CD8-positive, alpha-beta T cell (primary cell): ENCODE measurements at regions of chr20 and their contacts with region 1.

Region 1: DNA sequence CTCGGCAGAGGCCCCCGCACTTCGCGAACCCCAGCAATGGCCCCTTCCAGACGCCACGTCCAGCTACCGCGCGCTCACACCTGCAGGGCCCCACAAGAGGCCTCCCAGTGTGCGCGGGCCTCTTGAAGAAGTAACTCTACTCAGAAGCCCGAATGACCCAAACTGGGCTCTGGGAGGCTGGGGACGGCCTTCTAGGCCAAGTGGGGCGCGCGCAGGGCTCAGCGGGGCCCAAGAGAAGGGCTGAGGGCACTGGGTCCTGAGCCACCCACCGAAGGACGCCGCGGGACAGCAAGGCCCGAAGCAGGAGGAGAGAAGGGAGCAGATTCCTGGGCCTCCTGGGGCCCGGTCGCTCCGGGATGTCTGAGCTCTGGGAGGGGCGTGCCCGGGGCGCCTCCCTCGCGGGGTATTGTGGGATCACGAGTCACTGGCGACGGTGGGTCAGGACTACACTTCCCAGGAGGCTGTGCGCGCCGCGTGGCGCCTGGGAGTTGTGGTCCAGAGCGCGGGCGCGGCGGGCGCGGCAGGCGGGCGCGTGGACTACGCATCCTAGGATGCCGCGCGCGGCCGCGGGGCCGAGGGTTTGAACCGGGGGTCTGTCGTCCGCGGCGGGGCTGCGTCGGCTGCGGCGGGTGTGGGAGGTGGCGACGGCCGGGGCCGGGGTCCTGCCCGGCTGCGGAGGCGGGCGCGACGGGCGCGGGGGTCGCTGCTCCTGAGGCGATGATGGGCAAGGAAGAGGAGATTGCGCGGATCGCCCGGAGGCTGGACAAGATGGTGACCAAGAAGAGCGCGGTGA is at the start of gene TCEA2:
- DNase-seq: peak; percentile 84 to 97 (median 93)
- ATAC-seq: peak; percentile 94
- H3K4me3 ChIP-seq: peak within 1 kb of the TSS; percentile 47 to 68
- H3K4me3 Mint-ChIP-seq: peak within 1 kb of the TSS; percentile 82
- H3K27ac ChIP-seq: peak within 1 kb of the TSS; percentile 42 to 67
- H3K27ac Mint-ChIP-seq: peak within 1 kb of the TSS; percentile 63
- H3K4me1 ChIP-seq: peaks cover 48% of the 10 kb centered on the region
- H3K4me1 Mint-ChIP-seq: peaks cover 36% of the 10 kb centered on the region
- H3K27me3 ChIP-seq: no peaks in the 10 kb centered on the region
- H3K27me3 Mint-ChIP-seq: no peaks in the 10 kb centered on the region
- CTCF ChIP-seq: no peak
- total RNA-seq, gene TCEA2: 18.2 to 18.4 TPM

Region 2: DNA sequence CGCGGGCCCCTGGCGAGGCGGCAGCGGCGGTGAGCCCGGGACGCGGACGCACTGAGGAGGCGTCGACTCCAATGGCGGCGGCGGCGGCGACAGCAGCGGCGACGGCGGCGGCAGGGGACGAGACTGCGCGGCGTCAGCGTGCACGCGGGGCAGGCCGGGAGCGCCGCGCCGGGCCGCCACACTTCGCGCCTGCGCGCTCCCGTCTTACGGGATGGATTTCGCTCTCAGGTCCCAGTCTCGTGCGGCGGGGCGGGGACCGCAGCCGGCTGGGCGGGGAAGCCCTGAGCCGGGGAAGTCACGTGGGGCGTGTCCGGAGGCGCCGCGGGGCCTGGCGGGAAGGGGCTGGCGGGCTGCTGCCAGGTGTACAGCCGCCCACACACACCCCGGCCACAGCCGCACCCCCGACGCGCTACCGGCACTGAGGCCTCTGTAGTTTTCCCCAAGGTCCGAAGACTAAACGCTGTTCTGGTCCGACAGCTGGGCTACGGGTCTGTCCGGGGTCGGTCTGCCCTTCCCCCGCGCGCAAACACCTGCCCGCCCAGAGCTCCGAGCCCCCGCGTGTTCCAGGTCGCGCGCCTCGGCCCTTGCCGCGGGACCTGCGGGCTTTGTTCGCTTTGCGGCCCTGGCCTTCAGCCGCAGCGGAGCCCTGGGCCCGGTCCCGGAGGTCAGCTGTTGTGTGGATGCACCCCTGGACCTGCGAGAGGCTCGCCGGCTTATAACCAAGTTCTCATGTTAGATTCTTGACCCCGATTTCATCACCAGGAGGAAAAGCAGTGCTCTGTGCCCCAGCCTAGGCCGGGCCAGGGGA is 846.5 kb before region 1 on chr20 and contains the start of gene YTHDF1:
- CTCF ChIA-PET with region 1: no interaction called
- POLR2A ChIA-PET with region 1: no interaction called
- intact Hi-C with region 1: loop called in 1 of 2 experiments (anchors 10 kb)
- DNase-seq: peak; percentile 86 to 98 (median 95)
- ATAC-seq: peak; percentile 96
- H3K4me3 ChIP-seq: peak within 1 kb of the TSS; percentile 68 to 84
- H3K4me3 Mint-ChIP-seq: peak within 1 kb of the TSS; percentile 91
- H3K27ac ChIP-seq: peak within 1 kb of the TSS; percentile 73 to 74
- H3K27ac Mint-ChIP-seq: peak within 1 kb of the TSS; percentile 94
- H3K4me1 ChIP-seq: peaks cover 44% of the 10 kb centered on the region
- H3K4me1 Mint-ChIP-seq: peaks cover 44% of the 10 kb centered on the region
- H3K27me3 ChIP-seq: no peaks in the 10 kb centered on the region
- H3K27me3 Mint-ChIP-seq: peaks cover 2% of the 10 kb centered on the region
- CTCF ChIP-seq: no peak
- total RNA-seq, gene YTHDF1: 44.8 to 45.7 TPM

Region 3: DNA sequence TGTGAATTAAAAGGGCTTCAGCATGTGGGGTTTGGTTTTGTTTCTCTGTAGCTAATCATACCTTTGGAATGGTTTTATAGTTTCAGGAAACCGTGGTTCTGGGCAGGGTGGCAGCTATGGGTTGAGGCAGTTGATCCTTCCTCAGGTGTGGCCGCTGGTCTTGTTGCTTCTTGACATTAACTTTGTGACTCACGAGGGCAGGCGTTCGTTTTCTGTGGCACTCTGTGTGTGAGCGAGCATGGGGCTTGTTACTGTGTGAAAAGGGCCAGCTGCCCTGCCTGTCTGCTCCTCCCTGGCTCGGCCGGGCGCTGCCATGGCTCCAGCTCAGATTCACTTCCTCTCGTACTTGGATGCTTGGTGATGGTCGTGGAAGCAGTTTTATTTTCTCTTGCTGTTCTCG is 151.6 kb before region 1 on chr20:
- CTCF ChIA-PET with region 1: interaction called, 7 read pairs
- POLR2A ChIA-PET with region 1: no interaction called
- intact Hi-C with region 1: loop called in 1 of 2 experiments (anchors 1 kb)
- DNase-seq: no peak
- ATAC-seq: no peak
- H3K4me3 ChIP-seq: no peak overlapping the region
- H3K4me3 Mint-ChIP-seq: no peak overlapping the region
- H3K27ac ChIP-seq: no peak overlapping the region
- H3K27ac Mint-ChIP-seq: peak overlapping the region; percentile 46
- H3K4me1 ChIP-seq: peaks cover 13% of the 10 kb centered on the region
- H3K4me1 Mint-ChIP-seq: peaks cover 45% of the 10 kb centered on the region
- H3K27me3 ChIP-seq: no peaks in the 10 kb centered on the region
- H3K27me3 Mint-ChIP-seq: no peaks in the 10 kb centered on the region
- CTCF ChIP-seq: no peak

Region 4: DNA sequence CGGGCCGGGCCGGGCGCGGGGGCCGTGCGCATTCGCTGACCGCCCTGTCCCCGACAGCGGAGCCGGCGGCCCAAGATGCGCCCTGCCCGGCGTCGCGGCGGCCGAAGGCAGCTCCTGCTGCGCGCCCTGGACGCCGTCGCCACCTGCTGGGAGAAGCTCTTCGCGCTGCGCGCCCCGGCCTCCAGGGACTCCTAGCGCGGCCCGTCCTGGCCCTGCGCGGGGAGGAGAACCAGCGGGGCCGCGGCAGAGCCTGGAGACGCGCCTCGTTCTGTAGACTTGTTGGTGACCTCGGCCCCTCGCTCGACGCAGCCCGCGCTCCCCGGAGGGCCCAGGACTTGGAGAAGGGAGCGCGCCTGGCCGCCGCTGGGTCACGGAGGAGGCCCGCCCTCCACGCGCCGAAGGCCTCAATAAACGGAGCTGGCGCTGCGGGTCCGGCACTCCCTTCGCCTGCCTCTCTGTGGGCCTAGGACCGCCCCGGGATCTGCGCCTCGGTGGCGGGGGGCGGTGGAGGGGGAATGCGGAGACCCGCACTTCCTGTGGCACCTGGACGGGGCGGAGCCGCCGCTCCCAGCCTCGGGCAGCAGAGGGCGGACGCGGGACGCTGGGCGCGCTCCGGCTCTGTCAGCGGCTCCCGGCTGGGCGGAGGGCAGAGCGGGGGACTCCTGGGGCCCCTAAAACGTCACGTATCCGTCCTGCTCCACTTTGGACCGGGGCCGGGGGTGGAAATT is 24.1 kb before region 1 on chr20:
- CTCF ChIA-PET with region 1: interaction called, 62 read pairs
- POLR2A ChIA-PET with region 1: interaction called, 10 read pairs
- intact Hi-C with region 1: loop called (anchors 1 kb)
- DNase-seq: peak; percentile 57 to 91 (median 78)
- ATAC-seq: peak; percentile 78
- H3K4me3 ChIP-seq: peak overlapping the region; percentile 45 to 76
- H3K4me3 Mint-ChIP-seq: peak overlapping the region; percentile 78
- H3K27ac ChIP-seq: peak overlapping the region in 1 of 2 experiments; percentile 45
- H3K27ac Mint-ChIP-seq: no peak overlapping the region
- H3K4me1 ChIP-seq: peaks cover 75% of the 10 kb centered on the region
- H3K4me1 Mint-ChIP-seq: peaks cover 39% of the 10 kb centered on the region
- H3K27me3 ChIP-seq: peaks cover 0 to 3% of the 10 kb centered on the region in 2 experiments
- H3K27me3 Mint-ChIP-seq: no peaks in the 10 kb centered on the region
- CTCF ChIP-seq: peak; percentile 67

Region 5: GRCh38 chr20:64119681-64120341 is 57.0 kb after region 1 on chr20:
- CTCF ChIA-PET with region 1: interaction called, 9 read pairs
- POLR2A ChIA-PET with region 1: no interaction called
- intact Hi-C with region 1: loop called in 1 of 2 experiments (anchors 10 kb)
- DNase-seq: peak in 3 of 9 experiments; percentile 2 to 50 (median 27)
- ATAC-seq: peak; percentile 4
- H3K4me3 ChIP-seq: peak overlapping the region; percentile 36 to 38
- H3K4me3 Mint-ChIP-seq: peak overlapping the region; percentile 72
- H3K27ac ChIP-seq: peak overlapping the region in 1 of 2 experiments; percentile 39
- H3K27ac Mint-ChIP-seq: peak overlapping the region; percentile 62
- H3K4me1 ChIP-seq: peaks cover 9% of the 10 kb centered on the region
- H3K4me1 Mint-ChIP-seq: peaks cover 8% of the 10 kb centered on the region
- H3K27me3 ChIP-seq: peaks cover 0 to 3% of the 10 kb centered on the region in 2 experiments
- H3K27me3 Mint-ChIP-seq: peaks cover 4% of the 10 kb centered on the region
- CTCF ChIP-seq: no peak